Right ventricle myocardium superior (tissue), 1 donor: ENCODE measurements at regions of chr3 and their contacts with region 1.

Region 1: GRCh38 chr3:27279123-27279522 is 90.1 kb downstream of the NEK10 start:
- DNase-seq: no peak
- ATAC-seq: peak; percentile 80

Region 2: GRCh38 chr3:27134165-27134796 is 144.8 kb before region 1 on chr3:
- intact Hi-C with region 1: loop called (anchors 10 kb)
- DNase-seq: peak; percentile 69
- ATAC-seq: peak; percentile 75